ENCODE measurements at regions of chr9 and their contacts with region 1.

Region 1: DNA sequence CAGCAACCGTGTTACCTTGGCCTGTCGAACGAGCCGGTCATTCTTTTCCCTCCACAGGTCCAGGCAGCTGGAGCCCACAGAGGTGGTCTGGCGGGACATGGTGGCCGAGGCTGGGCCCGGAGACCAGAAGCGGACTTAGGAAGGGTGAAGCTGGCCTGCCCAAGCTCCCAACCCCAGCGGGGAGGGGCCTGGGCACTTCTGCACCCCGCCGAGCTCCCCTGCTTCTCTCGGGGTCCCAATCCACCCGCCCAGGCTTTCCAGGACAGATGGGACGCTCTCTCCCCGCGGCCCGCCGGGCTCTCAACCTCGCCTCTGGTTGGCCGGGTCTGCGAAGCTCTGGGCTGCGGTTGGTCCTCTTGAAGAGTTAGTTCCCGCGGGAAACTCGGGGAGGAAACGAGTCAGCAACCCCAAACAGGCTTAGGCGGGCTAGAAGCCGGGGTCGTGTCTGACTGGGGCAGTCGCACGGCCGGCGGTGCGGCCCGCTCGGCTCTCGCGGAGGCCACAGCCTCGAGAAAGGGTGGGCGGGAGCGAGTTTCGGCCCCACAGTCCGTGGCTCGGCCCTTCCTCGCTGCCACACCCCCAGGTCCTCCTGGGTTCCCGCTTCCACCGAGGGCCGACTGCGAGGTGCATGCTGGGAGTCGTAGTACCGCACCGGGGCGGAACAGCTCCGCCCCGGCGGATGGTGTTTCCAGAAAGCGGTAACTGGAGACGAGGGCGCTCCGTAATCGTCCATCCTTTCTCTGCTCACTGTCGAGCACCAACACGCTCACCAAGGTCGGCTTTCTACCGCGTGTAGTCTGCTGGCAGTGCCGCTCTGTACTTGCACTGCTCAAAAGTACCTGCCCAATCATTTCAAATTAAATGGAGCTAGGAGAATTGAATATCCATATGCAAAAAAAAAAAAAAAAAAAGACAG is at the start of gene FANCG:
- DNase-seq: peak; percentile 94
- H3K4me3 Mint-ChIP-seq: peak within 1 kb of the TSS; percentile 94
- H3K27ac Mint-ChIP-seq: peak within 1 kb of the TSS; percentile 54
- H3K4me1 Mint-ChIP-seq: peaks cover 9% of the 10 kb centered on the region
- H3K27me3 Mint-ChIP-seq: no peaks in the 10 kb centered on the region
- CTCF ChIP-seq: no peak
- total RNA-seq, gene FANCG: 20.2 and 21.2 TPM in 2 replicates

Region 2: DNA sequence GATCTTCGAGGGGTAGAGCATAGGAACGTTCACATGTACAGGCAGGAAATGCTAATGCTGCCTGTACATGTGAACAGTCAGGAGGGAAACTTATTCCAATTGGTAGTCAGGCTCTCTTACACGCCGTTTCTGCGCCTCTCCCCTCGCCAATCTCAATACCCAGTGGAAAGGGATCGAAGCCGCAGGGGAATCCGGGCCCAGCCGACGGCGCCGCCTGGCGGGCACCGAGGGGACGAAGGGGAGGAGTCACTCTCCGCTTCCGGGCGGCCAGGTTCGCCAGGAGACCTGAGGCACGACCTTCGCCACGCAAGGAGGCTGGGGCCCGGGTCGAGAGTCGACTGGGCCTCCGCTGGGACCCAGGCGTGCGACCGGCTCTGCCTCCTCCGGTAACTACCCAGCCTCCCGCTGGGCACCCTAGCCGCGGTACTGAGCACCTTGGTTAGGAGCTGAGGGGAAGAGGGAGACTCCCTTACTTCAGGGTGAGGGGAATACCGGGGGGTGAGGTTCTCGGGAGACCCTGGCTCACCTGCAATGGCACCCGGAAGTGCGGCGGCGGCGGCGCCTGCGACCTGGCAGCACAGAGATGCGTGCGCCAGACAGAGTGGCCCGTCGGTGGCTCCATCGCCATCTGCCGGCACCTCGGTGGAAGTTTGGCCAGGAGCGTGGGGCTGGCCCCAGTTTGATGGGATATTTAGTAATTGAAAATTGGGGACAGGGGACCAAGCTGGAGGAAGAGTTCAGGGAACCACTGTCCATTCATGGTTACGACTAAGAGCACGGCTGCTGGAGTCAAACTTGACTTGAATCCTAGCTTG is 16.6 kb after region 1 on chr9 and contains the start of gene PIGO:
- CTCF ChIA-PET with region 1: interaction called, 23 read pairs
- POLR2A ChIA-PET with region 1: interaction called, 85 read pairs
- intact Hi-C with region 1: no loop called
- DNase-seq: peak; percentile 85
- H3K4me3 Mint-ChIP-seq: peak within 1 kb of the TSS; percentile 85
- H3K27ac Mint-ChIP-seq: peak within 1 kb of the TSS; percentile 95
- H3K4me1 Mint-ChIP-seq: peaks cover 15% of the 10 kb centered on the region
- H3K27me3 Mint-ChIP-seq: no peaks in the 10 kb centered on the region
- CTCF ChIP-seq: peak; percentile 49
- total RNA-seq, gene PIGO: 34.8 and 39.2 TPM in 2 replicates

Region 3: GRCh38 chr9:35102926-35103659 is 23.4 kb after region 1 on chr9 and contains the start of gene STOML2:
- CTCF ChIA-PET with region 1: interaction called, 3 read pairs
- POLR2A ChIA-PET with region 1: interaction called, 85 read pairs
- intact Hi-C with region 1: no loop called
- DNase-seq: peak; percentile 95
- H3K4me3 Mint-ChIP-seq: peak within 1 kb of the TSS; percentile 99
- H3K27ac Mint-ChIP-seq: peak within 1 kb of the TSS; percentile 99
- H3K4me1 Mint-ChIP-seq: peaks cover 19% of the 10 kb centered on the region
- H3K27me3 Mint-ChIP-seq: no peaks in the 10 kb centered on the region
- CTCF ChIP-seq: no peak
- total RNA-seq, gene STOML2: 203 and 209 TPM in 2 replicates

Region 4: DNA sequence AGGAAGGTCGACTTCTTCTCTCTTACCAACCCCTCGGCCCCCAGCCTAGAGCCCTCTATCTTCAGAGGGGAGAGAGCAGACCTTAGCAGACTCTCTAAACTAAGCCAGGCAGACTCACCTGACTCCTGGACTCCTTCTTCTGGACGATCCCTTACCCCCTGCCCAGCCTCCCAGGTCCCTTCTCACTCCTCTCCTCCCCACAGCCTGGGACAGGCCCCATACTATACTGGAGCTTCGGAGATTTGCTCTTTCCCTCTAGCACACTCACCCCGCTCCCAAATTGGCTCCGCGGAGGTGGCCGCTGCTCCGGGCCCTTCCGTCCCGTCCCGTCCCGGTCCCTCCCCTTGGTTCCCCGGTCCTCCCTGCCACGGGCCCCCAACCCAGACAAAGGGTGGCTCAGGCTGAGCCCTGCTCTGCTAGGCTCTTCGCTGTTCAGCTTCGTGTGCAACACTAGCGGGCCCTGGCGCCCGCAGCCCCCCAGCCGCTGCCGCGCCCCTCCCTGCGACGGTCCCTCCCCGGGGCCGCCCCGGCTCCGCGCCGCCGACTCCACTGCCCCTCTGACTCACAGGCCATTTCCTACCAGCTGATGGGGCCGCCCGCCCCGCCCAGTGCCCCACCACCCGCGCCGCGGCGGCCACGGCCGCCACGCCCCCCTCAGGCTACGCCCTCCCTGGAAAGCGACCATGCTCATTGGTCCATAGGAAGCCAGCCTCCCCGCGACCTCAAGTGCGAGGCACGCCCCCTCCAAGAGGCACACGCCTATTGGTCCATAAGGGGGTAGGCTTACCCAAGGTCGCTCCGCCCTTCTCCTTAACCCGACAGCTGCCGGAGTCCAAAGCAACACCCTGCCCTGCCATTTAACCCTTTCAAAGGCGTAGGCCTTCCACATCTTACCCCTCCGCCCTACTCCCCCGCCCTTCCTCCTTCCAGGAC is 31.6 kb after region 1 on chr9:
- CTCF ChIA-PET with region 1: interaction called, 3 read pairs
- POLR2A ChIA-PET with region 1: interaction called, 40 read pairs
- intact Hi-C with region 1: no loop called
- DNase-seq: peak; percentile 98
- H3K4me3 Mint-ChIP-seq: peak overlapping the region; percentile 87
- H3K27ac Mint-ChIP-seq: peak overlapping the region; percentile 96
- H3K4me1 Mint-ChIP-seq: peaks cover 50% of the 10 kb centered on the region
- H3K27me3 Mint-ChIP-seq: no peaks in the 10 kb centered on the region
- CTCF ChIP-seq: no peak

Region 5: GRCh38 chr9:35138682-35139470 is 59.2 kb after region 1 on chr9:
- CTCF ChIA-PET with region 1: no interaction called
- POLR2A ChIA-PET with region 1: no interaction called
- intact Hi-C with region 1: no loop called
- DNase-seq: no peak
- H3K4me3 Mint-ChIP-seq: no peak overlapping the region
- H3K27ac Mint-ChIP-seq: no peak overlapping the region
- H3K4me1 Mint-ChIP-seq: no peaks in the 10 kb centered on the region
- H3K27me3 Mint-ChIP-seq: no peaks in the 10 kb centered on the region
- CTCF ChIP-seq: no peak

Measured in MCF 10A (cell line).